Calu3 (cell line): ENCODE measurements at regions of chr3 and their contacts with region 1.

Region 1: GRCh38 chr3:155664925-155665695 is 79.8 kb downstream of the PLCH1 start:
- DNase-seq: peak; percentile 67
- H3K4me3 Mint-ChIP-seq: peak overlapping the region; percentile 47
- H3K27ac Mint-ChIP-seq: peak overlapping the region; percentile 70
- H3K4me1 Mint-ChIP-seq: peaks cover 66% of the 10 kb centered on the region
- H3K27me3 Mint-ChIP-seq: no peaks in the 10 kb centered on the region
- CTCF ChIP-seq: no peak

Region 2: DNA sequence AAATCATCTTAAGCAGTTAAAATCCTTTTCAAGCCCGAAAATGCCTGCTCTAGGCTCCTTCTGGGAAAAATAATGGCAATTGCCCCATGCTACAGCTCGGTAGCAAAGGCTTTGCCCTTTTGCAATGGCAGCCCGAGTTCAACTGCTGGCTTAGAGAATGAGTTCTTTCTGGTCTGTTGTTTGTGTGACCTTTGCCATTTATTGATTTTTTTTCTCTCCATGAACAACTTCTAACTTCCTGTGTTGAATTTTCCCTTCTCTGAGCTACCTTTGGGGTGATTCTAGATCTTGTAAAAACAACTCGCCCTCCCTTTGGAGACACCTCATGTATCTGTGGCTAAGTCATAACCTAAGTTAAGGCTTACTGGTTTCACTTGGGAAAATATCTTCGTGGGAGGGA is 59.5 kb before region 1 on chr3:
- CTCF ChIA-PET with region 1: no interaction called
- intact Hi-C with region 1: loop called (anchors 2 kb)
- DNase-seq: peak; percentile 43
- H3K4me3 Mint-ChIP-seq: peak overlapping the region; percentile 28
- H3K27ac Mint-ChIP-seq: peak overlapping the region; percentile 67
- H3K4me1 Mint-ChIP-seq: peaks cover 43% of the 10 kb centered on the region
- H3K27me3 Mint-ChIP-seq: no peaks in the 10 kb centered on the region
- CTCF ChIP-seq: no peak

Region 3: DNA sequence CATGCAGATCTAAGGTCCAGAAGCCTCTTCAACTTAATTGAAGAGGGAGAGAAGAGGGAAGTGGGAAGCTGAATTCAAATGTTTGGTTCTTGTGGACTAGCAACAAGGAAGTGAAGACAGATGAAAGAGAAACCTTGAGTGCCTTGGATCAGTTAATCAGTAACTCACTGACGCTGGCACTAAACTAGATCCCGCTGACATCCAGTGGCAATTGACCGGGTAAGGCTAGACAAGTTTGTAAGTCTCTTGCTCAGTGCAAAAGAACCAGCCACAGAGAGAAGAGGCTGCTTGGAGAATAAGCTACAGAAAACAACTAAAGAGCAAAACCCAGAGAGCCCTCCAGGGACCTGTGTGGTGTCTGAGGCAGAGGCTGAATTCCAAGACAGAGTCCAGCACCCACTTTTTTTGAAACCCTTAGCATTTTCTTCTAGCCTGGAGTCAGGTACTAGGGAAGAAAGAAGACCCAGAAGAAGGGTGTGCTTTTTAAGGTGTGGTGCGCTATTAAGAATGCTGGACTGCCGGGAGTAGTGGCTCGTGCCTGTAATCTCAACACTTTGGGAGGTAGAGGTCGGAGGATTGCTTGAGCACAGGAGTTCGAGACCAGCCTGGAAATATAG is 72.8 kb after region 1 on chr3:
- CTCF ChIA-PET with region 1: no interaction called
- intact Hi-C with region 1: loop called (anchors 2 kb)
- DNase-seq: peak; percentile 88
- H3K4me3 Mint-ChIP-seq: peak overlapping the region; percentile 88
- H3K27ac Mint-ChIP-seq: peak overlapping the region; percentile 98
- H3K4me1 Mint-ChIP-seq: peaks cover 39% of the 10 kb centered on the region
- H3K27me3 Mint-ChIP-seq: no peaks in the 10 kb centered on the region
- CTCF ChIP-seq: no peak